ENCODE measurements at regions of chr2 and their contacts with region 1.

Region 1: DNA sequence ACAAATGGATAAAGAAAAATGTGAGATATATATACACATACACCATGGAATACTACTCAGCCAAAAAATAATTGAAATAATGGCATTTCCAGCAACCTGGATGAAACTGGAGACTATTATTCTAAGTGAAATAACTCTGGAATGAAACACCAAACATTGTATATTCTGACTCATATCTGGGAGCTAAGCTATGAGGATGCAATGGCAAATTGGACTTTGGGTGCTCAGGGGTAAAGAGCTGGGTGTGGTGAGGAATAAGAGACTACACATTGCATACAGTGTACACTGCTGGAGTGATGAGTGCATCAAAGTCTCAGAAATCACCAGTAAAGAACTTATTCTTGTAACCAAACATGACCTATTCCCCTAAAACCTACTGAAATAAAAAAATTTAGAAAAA is 636.0 kb upstream of the LRATD1 start:
- DNase-seq: no peak
- H3K4me3 ChIP-seq: no peak overlapping the region
- H3K27ac ChIP-seq: no peak overlapping the region
- H3K4me1 ChIP-seq: no peaks in the 10 kb centered on the region
- H3K27me3 ChIP-seq: no peaks in the 10 kb centered on the region
- CTCF ChIP-seq: no peak

Region 2: DNA sequence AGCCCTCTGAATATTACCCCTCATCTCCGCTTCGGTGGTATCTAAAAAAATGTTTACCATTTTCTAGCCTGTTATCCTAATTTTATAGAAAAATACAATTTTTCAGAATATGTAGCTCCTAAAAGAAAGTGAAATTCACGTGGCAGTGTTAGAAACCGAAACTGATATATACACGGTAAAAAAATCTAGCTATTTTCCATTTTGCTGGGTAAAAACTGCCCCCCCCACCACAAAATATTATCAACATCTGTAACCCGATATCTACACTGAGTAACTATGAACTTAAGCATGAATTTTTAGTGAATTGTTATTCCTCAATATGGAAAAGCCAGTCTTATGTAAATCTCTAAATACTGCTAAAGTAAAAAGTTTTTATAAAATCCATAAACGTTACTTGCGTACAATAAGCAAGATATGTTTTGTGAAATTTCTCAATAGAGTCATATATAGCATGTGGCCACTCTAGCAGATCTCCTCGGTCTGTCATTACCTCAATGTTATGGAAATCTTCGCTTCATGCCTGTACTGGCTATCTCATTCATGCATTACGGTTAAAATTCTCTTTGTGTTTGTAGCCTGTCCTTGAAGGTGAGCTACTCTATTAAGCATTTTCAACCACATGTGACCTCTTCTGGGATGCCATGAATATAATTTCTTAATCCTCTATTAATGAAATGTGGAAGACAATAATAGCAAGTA is 755.6 kb before region 1 on chr2:
- intact Hi-C with region 1: loop called (anchors 5 kb)
- DNase-seq: no peak
- H3K4me3 ChIP-seq: no peak overlapping the region
- H3K27ac ChIP-seq: no peak overlapping the region
- H3K4me1 ChIP-seq: no peaks in the 10 kb centered on the region
- H3K27me3 ChIP-seq: no peaks in the 10 kb centered on the region
- CTCF ChIP-seq: no peak

Measured in ascending aorta (tissue), 2 donors.